CD4-positive, alpha-beta memory T cell (primary cell): ENCODE measurements at regions of chr10 and their contacts with region 1.

Region 1: GRCh38 chr10:75401569-75402485 is at the start of gene ZNF503:
- DNase-seq: no peak
- H3K4me3 ChIP-seq: peak within 1 kb of the TSS; percentile 36 to 66
- H3K4me3 Mint-ChIP-seq: peak within 1 kb of the TSS; percentile 82 to 95 (median 86)
- H3K27ac ChIP-seq: no peak within 1 kb of the TSS
- H3K27ac Mint-ChIP-seq: no peak within 1 kb of the TSS
- H3K4me1 ChIP-seq: peaks cover 25% of the 10 kb centered on the region
- H3K4me1 Mint-ChIP-seq: peaks cover 10 to 34% (median 26%) of the 10 kb centered on the region in 4 donors
- H3K27me3 ChIP-seq: peaks cover 26% of the 10 kb centered on the region
- H3K27me3 Mint-ChIP-seq: peaks cover 43 to 48% of the 10 kb centered on the region in 2 donors
- total RNA-seq, gene ZNF503: 0.12 TPM in 1 of 2 experiments, not detected in the other

Region 2: GRCh38 chr10:75904499-75905283 is 502.9 kb after region 1 on chr10:
- CTCF ChIA-PET with region 1: no interaction called
- POLR2A ChIA-PET with region 1: no interaction called
- intact Hi-C with region 1: loop called (anchors 5 kb)
- DNase-seq: no peak
- H3K4me3 ChIP-seq: no peak overlapping the region
- H3K4me3 Mint-ChIP-seq: peak overlapping the region in 1 of 8 donors; percentile 32
- H3K27ac ChIP-seq: no peak overlapping the region
- H3K27ac Mint-ChIP-seq: no peak overlapping the region
- H3K4me1 ChIP-seq: no peaks in the 10 kb centered on the region
- H3K4me1 Mint-ChIP-seq: peaks cover 0 to 4% (median under 1%) of the 10 kb centered on the region in 4 donors
- H3K27me3 ChIP-seq: no peaks in the 10 kb centered on the region
- H3K27me3 Mint-ChIP-seq: peaks cover 1 to 9% of the 10 kb centered on the region in 2 donors

Region 3: GRCh38 chr10:76036111-76036940 is 634.5 kb after region 1 on chr10:
- CTCF ChIA-PET with region 1: no interaction called
- POLR2A ChIA-PET with region 1: no interaction called
- intact Hi-C with region 1: loop called (anchors 5 kb)
- DNase-seq: peak in 2 of 5 donors; percentile 2 to 16
- H3K4me3 ChIP-seq: no peak overlapping the region
- H3K4me3 Mint-ChIP-seq: no peak overlapping the region
- H3K27ac ChIP-seq: no peak overlapping the region
- H3K27ac Mint-ChIP-seq: no peak overlapping the region
- H3K4me1 ChIP-seq: no peaks in the 10 kb centered on the region
- H3K4me1 Mint-ChIP-seq: no peaks in the 10 kb centered on the region
- H3K27me3 ChIP-seq: no peaks in the 10 kb centered on the region
- H3K27me3 Mint-ChIP-seq: peaks cover 2 to 8% of the 10 kb centered on the region in 2 donors